ENCODE measurements at regions of chr11 and their contacts with region 1.

Region 1: DNA sequence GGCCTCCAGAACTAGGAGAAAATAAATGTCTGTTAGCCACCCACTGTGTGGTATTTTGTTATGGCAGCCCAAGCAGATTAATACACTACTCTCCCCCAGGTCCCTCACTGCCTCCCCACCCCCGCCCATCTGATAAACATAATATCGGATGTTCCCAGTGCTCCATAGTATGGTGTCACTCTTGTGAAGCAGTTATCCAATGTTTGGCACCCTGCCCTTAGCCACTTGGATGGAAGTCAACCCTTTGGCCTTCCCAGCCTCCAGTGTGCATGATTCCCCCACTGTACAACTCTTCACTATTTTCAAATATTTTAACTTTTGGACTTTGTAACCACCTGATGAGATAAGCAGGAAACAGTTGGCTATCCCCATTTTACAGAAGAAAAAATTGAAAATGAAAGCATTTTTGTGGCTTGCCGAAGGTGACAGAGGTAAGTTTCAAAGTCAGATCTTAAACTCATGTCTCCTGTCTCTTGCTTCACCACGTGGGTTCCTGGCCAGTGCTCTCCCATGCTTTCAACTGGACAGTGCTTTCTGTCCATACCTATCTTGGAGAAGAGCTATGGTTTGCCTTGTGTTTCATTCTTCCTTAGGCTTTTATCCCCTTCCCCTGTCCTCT is 53.2 kb downstream of the ALX4 start:
- DNase-seq: peak in 1 of 2 donors; percentile 43
- ATAC-seq: peak in 5 of 8 donors; percentile 34 to 69 (median 49)
- H3K4me3 ChIP-seq: no peak overlapping the region
- H3K27ac ChIP-seq: no peak overlapping the region
- H3K4me1 ChIP-seq: peaks cover 0 to 11% (median 2%) of the 10 kb centered on the region in 9 donors
- H3K27me3 ChIP-seq: no peaks in the 10 kb centered on the region
- CTCF ChIP-seq: no peak

Region 2: GRCh38 chr11:44133335-44133946 is 123.3 kb before region 1 on chr11:
- intact Hi-C with region 1: loop called in 1 of 10 experiments (anchors 10 kb)
- DNase-seq: no peak
- ATAC-seq: peak in 7 of 8 donors; percentile 16 to 68 (median 48)
- H3K4me3 ChIP-seq: no peak overlapping the region
- H3K27ac ChIP-seq: no peak overlapping the region
- H3K4me1 ChIP-seq: peaks cover 0 to 9% (median 0%) of the 10 kb centered on the region in 9 donors
- H3K27me3 ChIP-seq: no peaks in the 10 kb centered on the region
- CTCF ChIP-seq: peak; percentile 34 to 80 (median 63)

Measured in heart right ventricle (tissue), 16 donors.